GM18951 (cell line): ENCODE measurements at regions of chr4 and their contacts with region 1.

Region 1: GRCh38 chr4:150010525-150011126 is 67.6 kb upstream of the DCLK2 start:
- POLR2A ChIP-seq: no peak

Region 2: GRCh38 chr4:150867148-150867547 is 856.5 kb after region 1 on chr4:
- in situ Hi-C with region 1: loop called (anchors 25 kb)
- POLR2A ChIP-seq: no peak

Region 3: GRCh38 chr4:151184523-151185458 is 1174.2 kb after region 1 on chr4:
- in situ Hi-C with region 1: no loop called
- POLR2A ChIP-seq: no peak